GM12878 (cell line): ENCODE measurements at regions of chr6 and their contacts with region 1.

Region 1: DNA sequence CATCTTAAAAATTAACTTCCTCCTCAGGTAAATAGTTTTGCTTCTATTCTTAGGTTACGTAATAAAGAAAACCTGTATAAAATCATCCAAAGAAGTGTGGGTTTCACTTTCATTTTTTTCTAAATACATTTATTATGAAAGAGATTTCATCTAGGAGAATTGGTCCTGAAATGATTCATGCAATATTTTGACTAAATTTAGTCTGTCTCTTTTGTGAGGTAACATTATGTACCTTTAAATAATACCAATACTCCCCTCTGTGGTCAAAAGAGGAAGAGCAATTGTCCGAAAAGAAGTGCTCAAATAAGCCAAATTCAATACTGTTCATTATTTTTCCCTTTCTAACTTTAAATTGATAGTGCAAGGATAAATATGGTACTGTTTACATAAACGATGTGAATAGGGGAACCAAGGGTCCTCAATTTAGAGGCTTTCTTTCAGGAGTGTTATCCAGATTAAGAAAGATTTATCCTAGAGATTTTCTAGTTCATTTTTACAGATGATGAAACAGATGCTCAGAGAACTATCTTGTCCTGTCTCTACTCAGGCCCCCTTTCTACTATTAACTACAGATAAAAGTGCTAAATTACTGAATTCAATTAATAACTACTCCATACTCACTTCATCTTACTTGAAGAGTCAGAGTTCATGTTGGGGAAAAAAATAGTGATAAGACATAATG is 26.2 kb downstream of the CYP39A1 start:
- DNase-seq: peak; percentile 7
- ATAC-seq: peak; percentile 88
- H3K4me3 ChIP-seq: no peak overlapping the region
- H3K27ac ChIP-seq: no peak overlapping the region
- H3K4me1 ChIP-seq: no peaks in the 10 kb centered on the region
- H3K27me3 ChIP-seq: peaks cover 0 to 2% of the 10 kb centered on the region in 2 experiments; a peak in 1 of 4 replicates
- CTCF ChIP-seq: peak; percentile 40 to 60 (median 57); a peak in 4 of 6 replicates
- EP300 ChIP-seq: no peak
- POLR2A ChIP-seq: no peak
- RAD21 ChIP-seq: peak; percentile 72

Region 2: DNA sequence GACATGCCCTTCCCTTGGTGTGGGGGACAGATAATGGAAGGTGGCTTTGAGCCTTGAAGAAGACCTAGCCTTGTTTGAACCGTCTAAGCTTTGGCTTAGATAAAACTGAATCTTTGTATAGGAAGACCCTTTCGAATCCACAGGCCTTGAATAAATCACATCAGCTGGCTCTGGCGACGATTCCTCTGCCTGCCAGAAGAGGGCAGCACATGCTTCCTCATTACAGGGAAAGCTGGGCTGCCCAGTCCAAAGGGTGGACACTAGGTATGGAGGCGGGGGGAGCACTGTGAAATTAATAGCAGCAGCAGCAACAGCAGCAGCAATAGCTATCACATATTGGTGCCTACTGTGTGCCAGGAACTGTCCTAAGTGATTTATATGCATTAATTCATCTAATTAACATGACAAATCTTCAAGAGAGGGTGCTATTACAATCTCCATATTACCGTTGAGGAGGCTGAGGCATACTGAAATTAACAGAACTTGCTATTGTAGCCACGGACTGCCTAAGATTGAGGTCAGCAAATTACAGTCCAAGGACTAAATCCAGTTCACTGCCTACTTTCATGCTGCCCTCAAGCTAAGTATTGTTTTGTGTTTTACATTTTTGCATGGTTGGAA is 695.8 kb before region 1 on chr6:
- CTCF ChIA-PET with region 1: no interaction called
- POLR2A ChIA-PET with region 1: no interaction called
- RAD21 ChIA-PET with region 1: no interaction called
- SMC1A ChIA-PET with region 1: no interaction called
- in situ Hi-C with region 1: no loop called
- intact Hi-C with region 1: loop called (anchors 5 kb)
- DNase-seq: no peak
- ATAC-seq: peak; percentile 84
- H3K4me3 ChIP-seq: no peak overlapping the region
- H3K27ac ChIP-seq: no peak overlapping the region
- H3K4me1 ChIP-seq: no peaks in the 10 kb centered on the region
- H3K27me3 ChIP-seq: peaks cover 1 to 3% of the 10 kb centered on the region in 2 experiments; a peak in 1 of 4 replicates
- CTCF ChIP-seq: peak; percentile 86 to 97 (median 96)
- EP300 ChIP-seq: no peak
- POLR2A ChIP-seq: no peak
- RAD21 ChIP-seq: peak; percentile 73

Region 3: DNA sequence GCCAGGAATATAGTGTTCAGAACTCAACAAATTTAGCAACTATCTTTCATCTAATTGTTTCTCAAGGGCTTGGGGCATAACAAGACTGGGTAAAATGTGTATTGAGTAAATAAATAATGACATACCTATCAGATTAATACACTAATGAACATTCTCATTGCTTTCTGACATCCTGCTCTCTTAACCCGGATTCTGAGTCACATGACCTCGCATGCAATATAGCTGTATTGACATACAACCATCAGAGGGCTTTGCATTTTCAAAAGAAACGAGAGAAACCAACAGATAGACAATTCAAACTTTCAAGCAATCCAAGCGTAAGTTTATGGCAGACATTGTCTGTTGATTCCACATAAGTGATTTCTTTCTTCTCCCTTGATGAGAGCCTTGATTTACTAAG is 198.9 kb before region 1 on chr6:
- CTCF ChIA-PET with region 1: interaction called, 6 read pairs
- POLR2A ChIA-PET with region 1: no interaction called
- RAD21 ChIA-PET with region 1: no interaction called
- SMC1A ChIA-PET with region 1: no interaction called
- in situ Hi-C with region 1: loop called (anchors 5 kb)
- intact Hi-C with region 1: no loop called
- DNase-seq: no peak
- ATAC-seq: no peak
- H3K4me3 ChIP-seq: no peak overlapping the region
- H3K27ac ChIP-seq: no peak overlapping the region
- H3K4me1 ChIP-seq: no peaks in the 10 kb centered on the region
- H3K27me3 ChIP-seq: no peaks in the 10 kb centered on the region
- CTCF ChIP-seq: no peak
- EP300 ChIP-seq: no peak
- POLR2A ChIP-seq: no peak
- RAD21 ChIP-seq: no peak

Region 4: GRCh38 chr6:46652603-46653438 is 26.5 kb after region 1 on chr6 and contains the starts of genes CYP39A1 and SLC25A27:
- CTCF ChIA-PET with region 1: no interaction called
- POLR2A ChIA-PET with region 1: no interaction called
- RAD21 ChIA-PET with region 1: no interaction called
- SMC1A ChIA-PET with region 1: no interaction called
- in situ Hi-C with region 1: no loop called
- intact Hi-C with region 1: no loop called
- DNase-seq: no peak
- ATAC-seq: peak; percentile 100
- H3K4me3 ChIP-seq: peak within 1 kb of the TSS; percentile 46; the same call in 1 of the 2 replicates
- H3K27ac ChIP-seq: no peak within 1 kb of the TSS
- H3K4me1 ChIP-seq: no peaks in the 10 kb centered on the region
- H3K27me3 ChIP-seq: peaks cover 2 to 13% of the 10 kb centered on the region in 2 experiments
- CTCF ChIP-seq: no peak
- EP300 ChIP-seq: no peak
- POLR2A ChIP-seq: no peak
- RAD21 ChIP-seq: no peak
- polyA plus RNA-seq, gene CYP39A1: not detected
- polyA plus RNA-seq, gene SLC25A27: not detected